Activated naive CD4-positive, alpha-beta T cell treated with anti-CD3 and anti-CD28 coated beads for 36 hours (primary cell): ENCODE measurements at regions of chr7 and their contacts with region 1.

Region 1: DNA sequence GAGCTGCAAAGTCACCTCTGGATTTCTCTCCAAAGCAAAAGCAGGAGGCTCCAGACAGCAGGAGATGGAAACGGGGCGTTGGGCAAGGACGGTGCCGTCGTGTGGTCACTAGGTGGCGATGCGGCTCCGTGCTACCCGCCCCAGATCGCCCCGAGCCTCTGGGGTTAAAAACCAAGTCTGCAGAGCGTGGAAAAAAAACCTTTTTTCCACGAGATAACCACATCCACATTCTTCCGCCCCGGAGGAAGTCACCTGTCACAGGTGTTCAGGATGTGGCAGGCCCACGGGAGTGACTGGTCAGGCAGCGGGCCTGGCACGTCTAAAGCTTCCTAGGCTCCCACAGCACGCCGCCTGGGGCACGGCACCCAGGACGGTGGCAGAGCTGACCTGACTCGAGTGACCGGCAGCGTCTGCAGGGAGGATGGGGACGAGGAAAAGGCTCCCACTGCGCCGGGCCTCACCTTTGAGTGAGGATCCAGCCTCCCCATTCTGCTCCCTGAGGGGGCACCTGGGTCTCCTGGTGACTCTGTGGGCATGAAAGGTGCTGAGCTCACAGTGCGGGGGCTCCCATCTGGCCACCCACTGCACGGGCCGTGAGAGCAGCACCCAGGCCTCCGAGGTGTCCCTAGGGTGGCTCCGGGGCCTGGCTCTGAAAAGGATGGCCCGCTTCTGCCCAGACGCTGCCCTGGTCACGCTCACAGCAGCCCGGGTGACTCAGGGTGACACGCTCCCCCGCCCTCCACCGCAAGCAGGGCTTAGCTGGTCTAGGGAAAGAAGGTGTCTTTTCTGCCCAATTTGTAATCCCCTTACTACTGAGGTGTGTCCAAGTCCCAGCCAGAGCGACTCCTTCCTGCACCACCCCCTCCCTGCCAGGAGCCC is 71.3 kb upstream of the TNRC18 start:
- DNase-seq: peak; percentile 88
- H3K4me3 Mint-ChIP-seq: no peak overlapping the region
- H3K27ac Mint-ChIP-seq: no peak overlapping the region
- H3K4me1 Mint-ChIP-seq: peaks cover 26% of the 10 kb centered on the region
- H3K27me3 Mint-ChIP-seq: no peaks in the 10 kb centered on the region

Region 2: GRCh38 chr7:5218564-5219360 is 276.2 kb before region 1 on chr7:
- CTCF ChIA-PET with region 1: no interaction called
- intact Hi-C with region 1: no loop called
- DNase-seq: no peak
- H3K4me3 Mint-ChIP-seq: no peak overlapping the region
- H3K27ac Mint-ChIP-seq: no peak overlapping the region
- H3K4me1 Mint-ChIP-seq: no peaks in the 10 kb centered on the region
- H3K27me3 Mint-ChIP-seq: no peaks in the 10 kb centered on the region

Region 3: DNA sequence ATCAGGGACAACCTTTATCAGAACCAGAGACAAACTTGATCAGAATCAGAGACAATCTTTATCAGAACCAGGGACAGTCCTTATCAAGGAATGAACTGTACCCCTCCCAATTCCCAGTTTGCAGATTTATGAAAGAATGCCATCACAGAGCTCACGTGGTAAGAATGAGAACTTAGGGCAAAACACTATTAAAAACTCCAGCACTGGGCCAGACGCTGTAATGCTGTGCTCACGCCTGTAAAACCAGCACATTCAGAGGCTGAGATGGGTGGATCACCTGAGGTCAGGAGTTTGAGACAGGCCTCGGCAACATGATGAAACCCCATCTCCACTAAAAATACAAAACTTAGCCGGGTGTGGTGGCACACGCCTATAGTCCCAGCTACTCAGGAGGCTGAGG is 13.8 kb after region 1 on chr7:
- CTCF ChIA-PET with region 1: interaction called, 12 read pairs
- intact Hi-C with region 1: no loop called
- DNase-seq: no peak
- H3K4me3 Mint-ChIP-seq: no peak overlapping the region
- H3K27ac Mint-ChIP-seq: no peak overlapping the region
- H3K4me1 Mint-ChIP-seq: peaks cover 10% of the 10 kb centered on the region
- H3K27me3 Mint-ChIP-seq: no peaks in the 10 kb centered on the region

Region 4: DNA sequence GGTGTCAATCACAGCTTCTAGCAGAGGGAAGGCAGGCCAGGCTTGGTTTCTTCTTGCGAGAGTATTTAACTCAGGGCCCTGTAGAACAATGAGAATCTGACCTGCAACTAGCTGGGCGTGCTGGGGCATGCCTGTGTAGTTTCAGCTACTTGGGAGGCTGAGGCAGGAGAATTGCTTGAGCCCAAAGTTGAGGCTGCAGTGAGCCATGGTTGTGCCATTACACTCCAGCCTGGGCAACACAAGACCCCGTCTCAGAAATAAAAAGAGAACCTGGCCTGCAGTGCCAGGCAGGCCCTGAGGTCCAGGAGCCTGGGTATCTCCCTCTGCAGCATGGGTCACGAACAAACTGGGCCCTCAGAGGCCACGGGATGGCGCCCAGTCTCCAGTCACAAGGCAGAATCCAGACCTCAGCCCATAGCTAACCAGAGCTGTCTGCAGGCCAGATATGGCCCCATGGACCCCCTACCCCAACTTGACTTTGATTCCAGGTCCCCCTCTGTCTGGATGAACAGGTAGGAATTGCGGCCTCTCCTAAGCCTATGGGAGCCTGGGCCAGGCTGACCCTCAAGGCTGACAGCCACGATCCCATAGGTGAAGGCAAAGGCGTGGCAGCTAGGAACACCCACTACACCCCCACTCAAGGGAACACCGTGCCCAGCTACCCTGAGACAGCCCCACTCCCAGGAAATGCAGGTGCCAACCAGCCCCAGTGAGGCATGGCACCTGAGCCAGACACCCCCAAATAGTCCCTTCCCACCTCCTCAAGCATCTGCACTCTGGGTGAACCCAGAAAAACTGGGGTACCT is 31.4 kb after region 1 on chr7:
- CTCF ChIA-PET with region 1: interaction called, 12 read pairs
- intact Hi-C with region 1: no loop called
- DNase-seq: peak; percentile 58
- H3K4me3 Mint-ChIP-seq: peak overlapping the region; percentile 99
- H3K27ac Mint-ChIP-seq: peak overlapping the region; percentile 95
- H3K4me1 Mint-ChIP-seq: peaks cover 30% of the 10 kb centered on the region
- H3K27me3 Mint-ChIP-seq: no peaks in the 10 kb centered on the region

Region 5: GRCh38 chr7:5677538-5678294 is 182.8 kb after region 1 on chr7:
- CTCF ChIA-PET with region 1: interaction called, 5 read pairs
- intact Hi-C with region 1: loop called (anchors 1 kb)
- DNase-seq: peak; percentile 74
- H3K4me3 Mint-ChIP-seq: no peak overlapping the region
- H3K27ac Mint-ChIP-seq: peak overlapping the region; percentile 3
- H3K4me1 Mint-ChIP-seq: peaks cover 50% of the 10 kb centered on the region
- H3K27me3 Mint-ChIP-seq: no peaks in the 10 kb centered on the region

Region 6: GRCh38 chr7:5704534-5704922 is 209.6 kb after region 1 on chr7:
- CTCF ChIA-PET with region 1: interaction called, 29 read pairs
- intact Hi-C with region 1: loop called (anchors 1 kb)
- DNase-seq: peak; percentile 92
- H3K4me3 Mint-ChIP-seq: no peak overlapping the region
- H3K27ac Mint-ChIP-seq: no peak overlapping the region
- H3K4me1 Mint-ChIP-seq: peaks cover 75% of the 10 kb centered on the region
- H3K27me3 Mint-ChIP-seq: no peaks in the 10 kb centered on the region

Region 7: GRCh38 chr7:5780801-5781496 is 286.0 kb after region 1 on chr7:
- CTCF ChIA-PET with region 1: no interaction called
- intact Hi-C with region 1: loop called (anchors 2 kb)
- DNase-seq: peak; percentile 57
- H3K4me3 Mint-ChIP-seq: peak overlapping the region; percentile 84
- H3K27ac Mint-ChIP-seq: peak overlapping the region; percentile 78
- H3K4me1 Mint-ChIP-seq: peaks cover 42% of the 10 kb centered on the region
- H3K27me3 Mint-ChIP-seq: no peaks in the 10 kb centered on the region